Testis (tissue), 5 donors: ENCODE measurements at regions of chr19 and their contacts with region 1.

Region 1: DNA sequence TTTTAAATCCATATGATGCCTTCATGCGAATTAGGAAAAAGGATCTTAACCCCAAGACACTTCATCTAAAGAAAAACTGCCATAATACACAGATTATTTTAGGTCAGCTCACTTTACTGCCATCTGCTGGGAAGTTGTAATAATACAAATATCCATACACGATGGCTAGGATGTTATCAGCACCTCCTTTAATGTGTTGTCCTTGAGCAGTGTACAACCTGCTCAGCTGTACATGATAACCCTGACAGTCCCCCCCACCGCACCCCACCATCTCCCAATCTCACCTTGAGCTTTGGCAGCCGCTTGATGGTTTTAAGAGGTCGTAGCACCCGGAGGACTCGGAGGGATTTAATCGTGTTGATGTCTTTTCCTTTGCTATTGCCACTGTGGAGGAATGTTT is 112.2 kb downstream of the IER2 start:
- DNase-seq: no peak
- H3K4me3 ChIP-seq: no peak overlapping the region
- H3K27ac ChIP-seq: no peak overlapping the region
- H3K4me1 ChIP-seq: no peaks in the 10 kb centered on the region
- H3K27me3 ChIP-seq: no peaks in the 10 kb centered on the region
- CTCF ChIP-seq: peak; percentile 46 to 50 (median 47)
- POLR2A ChIP-seq: no peak

Region 2: GRCh38 chr19:12965017-12965811 is 297.2 kb before region 1 on chr19:
- intact Hi-C with region 1: loop called (anchors 5 kb)
- DNase-seq: peak; percentile 86
- H3K4me3 ChIP-seq: peak overlapping the region; percentile 27 to 54
- H3K27ac ChIP-seq: peak overlapping the region in 1 of 2 donors; percentile 8
- H3K4me1 ChIP-seq: peaks cover 8% of the 10 kb centered on the region
- H3K27me3 ChIP-seq: no peaks in the 10 kb centered on the region
- CTCF ChIP-seq: peak; percentile 82 to 95 (median 92)
- POLR2A ChIP-seq: no peak

Region 3: DNA sequence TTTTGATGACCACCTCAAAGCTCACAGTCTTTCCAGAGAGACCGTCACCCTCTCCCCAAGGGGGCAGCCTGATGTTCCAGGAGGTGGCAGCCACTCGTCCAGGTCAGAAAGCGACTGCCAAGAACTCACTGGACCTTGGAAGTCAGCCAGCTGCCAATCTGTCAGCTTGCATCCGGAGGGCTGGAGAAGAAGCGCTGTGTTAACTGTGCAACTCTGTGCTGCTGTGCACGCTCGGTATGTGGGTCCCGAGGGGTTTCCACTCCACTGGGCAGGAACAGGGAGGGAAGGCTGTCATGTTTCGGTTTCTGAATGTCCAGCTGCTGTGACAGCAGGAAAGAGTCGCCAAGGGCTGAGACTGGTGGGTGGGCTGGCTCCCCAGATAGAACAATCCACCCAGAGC is 154.6 kb after region 1 on chr19:
- intact Hi-C with region 1: no loop called
- DNase-seq: peak; percentile 34
- H3K4me3 ChIP-seq: no peak overlapping the region
- H3K27ac ChIP-seq: no peak overlapping the region
- H3K4me1 ChIP-seq: no peaks in the 10 kb centered on the region
- H3K27me3 ChIP-seq: no peaks in the 10 kb centered on the region
- CTCF ChIP-seq: no peak
- POLR2A ChIP-seq: no peak